GM10248 (cell line): ENCODE measurements at regions of chr12 and their contacts with region 1.

Region 1: GRCh38 chr12:69879041-69879960 is 54.3 kb downstream of the MYRFL start:
- DNase-seq: peak; percentile 79
- CTCF ChIP-seq: peak; percentile 89

Region 2: DNA sequence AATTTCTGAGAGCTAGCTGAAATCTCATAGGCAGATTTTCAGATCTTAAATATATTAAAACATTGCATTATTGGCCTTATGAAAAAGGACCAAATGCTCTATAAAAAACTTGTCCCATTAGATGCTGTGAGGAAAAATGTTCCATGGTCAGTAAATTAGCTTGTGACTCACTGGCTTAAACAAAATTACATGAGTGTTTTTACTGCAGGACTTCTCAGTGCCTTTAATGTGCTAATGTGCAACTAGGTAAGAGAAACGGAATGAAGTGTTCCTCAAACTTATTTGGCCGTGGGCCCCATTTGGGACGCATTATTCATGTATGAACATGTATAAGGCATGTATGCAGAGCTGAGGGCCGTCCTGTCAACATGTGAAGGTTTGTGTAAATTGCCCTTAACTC is 12.6 kb before region 1 on chr12:
- CTCF ChIA-PET with region 1: interaction called, 13 read pairs
- POLR2A ChIA-PET with region 1: no interaction called
- DNase-seq: no peak
- CTCF ChIP-seq: no peak

Region 3: GRCh38 chr12:69900720-69901131 is 21.4 kb after region 1 on chr12:
- CTCF ChIA-PET with region 1: interaction called, 44 read pairs
- POLR2A ChIA-PET with region 1: no interaction called
- DNase-seq: peak; percentile 29
- CTCF ChIP-seq: peak; percentile 79

Region 4: DNA sequence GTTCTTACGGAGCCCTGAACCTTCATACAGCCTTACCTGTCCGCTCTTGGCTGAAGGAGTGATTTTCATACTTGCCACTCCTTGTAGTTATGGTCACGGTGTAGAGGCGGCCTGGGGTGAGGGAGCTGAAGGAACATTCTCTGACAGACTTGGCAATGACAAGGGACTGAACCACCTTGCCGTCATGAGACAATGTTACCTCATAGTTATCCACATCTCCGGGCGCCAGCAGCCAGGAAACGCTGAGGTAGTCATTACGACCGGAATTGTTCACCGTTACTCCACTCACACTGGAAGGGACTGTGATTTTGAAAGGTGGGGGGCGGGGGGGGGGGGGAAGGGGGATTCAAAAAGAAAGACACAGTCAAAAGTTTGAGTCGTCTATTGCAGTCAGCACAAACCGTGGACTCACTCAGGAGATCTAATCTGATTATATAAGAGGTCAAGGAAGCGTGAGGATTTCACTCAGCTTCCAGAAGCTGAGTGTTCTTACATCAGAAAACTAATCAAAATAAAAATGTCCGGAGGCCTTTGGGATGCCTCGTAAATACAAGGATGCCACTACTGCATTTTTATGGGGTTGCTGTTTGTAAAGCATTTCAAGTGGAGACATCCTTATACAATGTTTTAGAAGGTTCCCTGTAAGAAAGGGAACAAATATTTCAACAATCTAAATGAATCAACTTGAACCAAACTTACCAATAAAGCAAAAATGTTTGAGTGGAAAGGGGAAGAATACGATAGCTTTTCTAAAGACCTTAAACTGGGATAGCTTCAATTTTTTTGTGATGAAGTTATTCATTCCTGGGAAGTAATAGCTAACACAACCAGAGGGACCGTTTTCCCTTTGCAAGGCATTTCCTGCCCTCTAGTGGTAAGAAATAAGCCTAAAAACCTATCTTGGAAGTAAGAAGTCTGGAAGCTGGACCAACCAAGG is 697.3 kb after region 1 on chr12:
- CTCF ChIA-PET with region 1: interaction called, 41 read pairs
- POLR2A ChIA-PET with region 1: no interaction called
- DNase-seq: peak; percentile 34
- CTCF ChIP-seq: peak; percentile 72

Region 5: GRCh38 chr12:70719672-70720420 is 840.5 kb after region 1 on chr12:
- CTCF ChIA-PET with region 1: interaction called, 63 read pairs
- POLR2A ChIA-PET with region 1: no interaction called
- DNase-seq: peak; percentile 30
- CTCF ChIP-seq: peak; percentile 91

Region 6: DNA sequence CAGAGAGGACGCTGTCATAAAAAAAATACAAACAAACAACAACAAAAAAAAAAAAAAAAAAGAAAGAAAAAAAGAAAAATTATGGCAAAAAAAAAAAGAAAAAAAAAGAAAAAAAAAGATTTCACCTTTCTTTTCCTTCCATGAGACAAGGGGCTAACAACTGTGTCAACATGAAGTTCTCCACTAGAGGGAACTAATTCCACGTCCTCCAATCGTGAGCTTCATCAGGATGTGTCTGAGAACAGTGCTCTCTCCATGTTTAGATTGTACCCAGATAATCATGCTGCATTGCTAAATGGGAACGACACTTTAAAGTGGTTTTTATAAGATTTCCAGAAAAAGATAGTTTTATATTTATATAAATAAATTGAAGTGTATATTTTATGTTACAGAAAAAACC is 854.1 kb after region 1 on chr12:
- CTCF ChIA-PET with region 1: interaction called, 81 read pairs
- POLR2A ChIA-PET with region 1: no interaction called
- DNase-seq: peak; percentile 56
- CTCF ChIP-seq: peak; percentile 59